Ovary (tissue), 10 donors: ENCODE measurements at regions of chr17 and their contacts with region 1.

Region 1: DNA sequence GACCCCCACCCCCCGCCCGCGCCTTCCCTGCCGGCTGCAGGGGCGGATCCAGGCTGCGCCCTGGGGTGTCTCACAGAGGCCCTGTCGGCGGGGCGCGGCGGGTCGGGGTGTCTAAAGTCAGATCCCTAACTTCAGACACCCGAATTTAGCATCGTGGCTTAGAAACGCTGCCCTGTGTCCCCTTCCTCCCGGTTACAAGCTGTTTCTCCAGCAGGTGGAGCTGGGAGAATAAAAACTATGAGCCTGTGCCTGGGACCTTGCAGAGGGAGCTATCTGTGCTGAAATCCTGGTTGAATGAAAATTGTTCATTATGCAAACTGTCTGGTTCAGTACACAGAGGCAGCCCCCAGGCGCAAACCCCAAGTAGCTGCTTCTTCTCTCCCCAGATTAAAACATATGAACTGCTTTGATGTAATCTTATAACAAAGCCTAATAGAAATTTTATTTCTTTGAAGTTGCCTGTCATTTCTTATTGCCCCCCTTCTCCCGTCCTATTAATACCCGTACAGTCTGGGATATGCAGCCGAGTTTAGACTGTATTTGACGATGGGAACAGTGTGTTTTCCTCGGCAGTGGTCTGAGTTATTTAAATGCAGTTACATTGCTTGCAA is 79.0 kb downstream of the RPA1 start:
- DNase-seq: peak; percentile 62 to 75 (median 66)
- H3K4me3 ChIP-seq: no peak overlapping the region
- H3K27ac ChIP-seq: no peak overlapping the region
- H3K4me1 ChIP-seq: peaks cover 6% of the 10 kb centered on the region
- H3K27me3 ChIP-seq: no peaks in the 10 kb centered on the region
- CTCF ChIP-seq: peak; percentile 54 to 77 (median 63)
- EP300 ChIP-seq: no peak
- POLR2A ChIP-seq: no peak

Region 2: GRCh38 chr17:2029911-2030778 is 121.3 kb after region 1 on chr17 and contains the start of gene DPH1:
- intact Hi-C with region 1: loop called (anchors 1 to 5 kb)
- DNase-seq: peak; percentile 85 to 92 (median 90)
- H3K4me3 ChIP-seq: peak within 1 kb of the TSS; percentile 97
- H3K27ac ChIP-seq: peak within 1 kb of the TSS in 1 of 2 donors; percentile 6
- H3K4me1 ChIP-seq: peaks cover 5% of the 10 kb centered on the region
- H3K27me3 ChIP-seq: no peaks in the 10 kb centered on the region
- CTCF ChIP-seq: peak in 2 of 3 donors; percentile 19 to 24
- EP300 ChIP-seq: no peak
- POLR2A ChIP-seq: peak; percentile 45
- total RNA-seq, gene DPH1: 42.4 to 77.7 (median 46.0) TPM

Region 3: GRCh38 chr17:2094891-2095535 is 186.2 kb after region 1 on chr17:
- intact Hi-C with region 1: no loop called
- DNase-seq: no peak
- H3K4me3 ChIP-seq: no peak overlapping the region
- H3K27ac ChIP-seq: no peak overlapping the region
- H3K4me1 ChIP-seq: peaks cover 2% of the 10 kb centered on the region
- H3K27me3 ChIP-seq: no peaks in the 10 kb centered on the region
- CTCF ChIP-seq: peak in 2 of 3 donors; percentile 19 to 36
- EP300 ChIP-seq: no peak
- POLR2A ChIP-seq: no peak

Region 4: GRCh38 chr17:2275722-2276121 is 366.9 kb after region 1 on chr17:
- intact Hi-C with region 1: loop called in 2 of 4 experiments (anchors 5 kb)
- DNase-seq: no peak
- H3K4me3 ChIP-seq: no peak overlapping the region
- H3K27ac ChIP-seq: no peak overlapping the region
- H3K4me1 ChIP-seq: no peaks in the 10 kb centered on the region
- H3K27me3 ChIP-seq: no peaks in the 10 kb centered on the region
- CTCF ChIP-seq: no peak
- EP300 ChIP-seq: no peak
- POLR2A ChIP-seq: no peak